ENCODE measurements at regions of chr11 and their contacts with region 1.

Region 1: DNA sequence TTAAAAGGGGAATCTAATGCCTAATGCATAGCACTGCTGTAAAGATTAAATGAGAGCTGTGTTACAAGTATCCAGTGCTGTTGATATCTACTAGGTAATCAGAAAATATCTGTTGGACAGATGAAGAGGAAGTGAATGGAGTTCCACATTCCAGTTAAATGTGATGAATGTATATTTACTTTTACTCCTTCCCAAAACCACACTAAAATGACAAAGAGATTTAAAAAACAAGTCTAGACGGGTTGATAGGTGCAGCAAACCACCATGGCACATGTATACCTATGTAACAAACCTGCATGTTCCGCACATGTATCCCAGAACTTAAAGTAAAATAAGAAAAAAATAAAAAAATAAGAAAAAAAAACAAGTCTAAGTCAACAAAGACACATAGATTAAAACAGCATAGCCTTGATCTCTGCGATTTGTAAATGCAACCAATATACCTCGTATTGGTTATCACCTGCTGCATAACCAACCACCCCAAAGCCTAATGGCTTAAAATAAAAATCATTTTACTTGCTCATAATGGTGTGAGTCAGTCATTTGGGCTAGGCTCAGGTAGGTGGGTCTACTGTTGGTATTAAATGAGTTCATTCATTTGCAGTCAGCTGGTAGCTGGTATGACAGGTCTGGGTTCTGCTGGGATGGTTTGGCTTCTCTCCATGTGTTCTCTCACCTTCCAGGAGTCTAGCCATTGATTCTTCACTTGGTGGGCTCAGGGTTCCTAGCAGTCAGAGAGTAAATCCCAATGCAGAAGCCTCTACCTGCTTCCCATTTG is 39.7 kb upstream of the SLC6A5 start:
- DNase-seq: no peak
- H3K4me3 ChIP-seq: no peak overlapping the region
- H3K27ac ChIP-seq: no peak overlapping the region
- H3K4me1 ChIP-seq: no peaks in the 10 kb centered on the region
- H3K27me3 ChIP-seq: no peaks in the 10 kb centered on the region
- CTCF ChIP-seq: no peak
- EP300 ChIP-seq: no peak
- POLR2A ChIP-seq: no peak

Region 2: GRCh38 chr11:20489948-20490347 is 69.8 kb before region 1 on chr11:
- in situ Hi-C with region 1: loop called in 1 of 4 experiments (anchors 10 kb)
- intact Hi-C with region 1: no loop called
- DNase-seq: no peak
- H3K4me3 ChIP-seq: no peak overlapping the region
- H3K27ac ChIP-seq: no peak overlapping the region
- H3K4me1 ChIP-seq: no peaks in the 10 kb centered on the region
- H3K27me3 ChIP-seq: no peaks in the 10 kb centered on the region
- CTCF ChIP-seq: no peak
- EP300 ChIP-seq: no peak
- POLR2A ChIP-seq: no peak